PC-9 (cell line): ENCODE measurements at regions of chr3 and their contacts with region 1.

Region 1: DNA sequence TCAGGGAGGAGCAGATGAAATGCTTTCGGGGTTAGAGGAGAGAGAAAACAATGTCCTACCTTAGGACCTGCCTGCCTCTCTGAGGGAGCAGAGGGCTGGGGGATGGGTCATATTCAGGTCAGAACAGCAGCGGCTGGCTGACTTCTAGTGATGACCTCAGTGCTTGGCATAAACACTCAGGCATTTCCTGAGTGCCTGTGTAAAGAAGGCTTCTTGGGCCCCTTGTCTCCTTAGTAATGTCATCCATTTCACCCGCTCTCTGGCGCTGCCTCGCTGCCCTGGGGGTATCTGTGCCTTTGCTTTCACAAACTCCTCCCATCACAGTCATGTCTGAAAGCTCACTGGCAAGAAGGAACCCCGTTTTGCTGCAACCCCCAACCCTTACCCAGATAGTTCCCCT is 82.9 kb upstream of the GSK3B start:
- DNase-seq: peak; percentile 79 to 86
- H3K4me3 ChIP-seq: peak overlapping the region; percentile 32; the same call in 1 of the 2 replicates
- H3K27ac ChIP-seq: peak overlapping the region; percentile 78
- H3K4me1 ChIP-seq: peaks cover 38% of the 10 kb centered on the region
- H3K27me3 ChIP-seq: no peaks in the 10 kb centered on the region
- CTCF ChIP-seq: no peak

Region 2: GRCh38 chr3:120052225-120052624 is 124.9 kb before region 1 on chr3:
- CTCF ChIA-PET with region 1: no interaction called
- POLR2A ChIA-PET with region 1: no interaction called
- intact Hi-C with region 1: no loop called
- DNase-seq: no peak
- H3K4me3 ChIP-seq: no peak overlapping the region
- H3K27ac ChIP-seq: no peak overlapping the region
- H3K4me1 ChIP-seq: no peaks in the 10 kb centered on the region
- H3K27me3 ChIP-seq: no peaks in the 10 kb centered on the region
- CTCF ChIP-seq: no peak

Region 3: DNA sequence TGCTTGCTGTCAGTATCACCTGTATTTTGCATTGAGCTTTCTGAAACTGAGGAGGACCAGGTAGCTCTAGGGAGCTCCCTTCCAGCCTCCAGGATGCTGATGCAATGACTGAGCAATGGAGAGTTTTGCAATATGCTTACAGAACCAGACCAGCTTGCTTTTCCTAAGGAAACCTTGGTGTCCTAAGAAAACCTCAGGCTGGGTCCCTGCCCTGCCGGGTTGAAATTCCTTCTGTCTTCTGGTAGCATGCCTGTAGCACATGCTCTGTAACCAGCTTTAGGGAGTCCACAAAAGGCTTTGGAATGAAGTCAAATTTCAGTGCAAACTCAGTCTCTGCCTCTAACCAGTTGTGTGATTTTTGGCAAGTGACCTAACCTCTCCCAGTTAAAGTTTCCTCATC is 17.1 kb before region 1 on chr3:
- CTCF ChIA-PET with region 1: no interaction called
- POLR2A ChIA-PET with region 1: interaction called, 5 read pairs
- intact Hi-C with region 1: loop called (anchors 1 kb)
- DNase-seq: peak; percentile 90 to 99
- H3K4me3 ChIP-seq: no peak overlapping the region; the same call in 1 of the 2 replicates
- H3K27ac ChIP-seq: peak overlapping the region; percentile 98
- H3K4me1 ChIP-seq: peaks cover 43% of the 10 kb centered on the region
- H3K27me3 ChIP-seq: no peaks in the 10 kb centered on the region
- CTCF ChIP-seq: no peak

Region 4: DNA sequence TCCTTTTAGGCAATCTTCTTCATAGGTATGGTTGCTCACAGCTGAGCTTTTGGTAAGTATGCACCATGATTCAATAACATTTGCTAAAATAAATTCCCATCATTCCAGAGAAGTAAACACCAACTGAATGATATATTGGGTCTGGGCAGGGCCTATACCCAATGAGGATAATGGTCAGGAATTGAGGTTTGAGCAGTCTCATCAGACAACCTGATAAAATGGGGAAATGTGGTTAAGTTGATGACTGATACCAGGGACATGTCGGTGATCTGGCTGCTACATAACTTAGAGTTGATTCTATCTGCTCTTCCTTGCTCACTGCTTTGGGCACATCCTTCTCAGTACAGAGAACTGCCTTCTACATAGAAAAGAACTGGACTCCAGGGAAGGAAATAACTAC is 15.0 kb after region 1 on chr3:
- CTCF ChIA-PET with region 1: no interaction called
- POLR2A ChIA-PET with region 1: no interaction called
- intact Hi-C with region 1: no loop called
- DNase-seq: no peak
- H3K4me3 ChIP-seq: no peak overlapping the region
- H3K27ac ChIP-seq: no peak overlapping the region
- H3K4me1 ChIP-seq: peaks cover 20% of the 10 kb centered on the region
- H3K27me3 ChIP-seq: no peaks in the 10 kb centered on the region
- CTCF ChIP-seq: no peak